ENCODE measurements at regions of chr1 and their contacts with region 1.

Region 1: DNA sequence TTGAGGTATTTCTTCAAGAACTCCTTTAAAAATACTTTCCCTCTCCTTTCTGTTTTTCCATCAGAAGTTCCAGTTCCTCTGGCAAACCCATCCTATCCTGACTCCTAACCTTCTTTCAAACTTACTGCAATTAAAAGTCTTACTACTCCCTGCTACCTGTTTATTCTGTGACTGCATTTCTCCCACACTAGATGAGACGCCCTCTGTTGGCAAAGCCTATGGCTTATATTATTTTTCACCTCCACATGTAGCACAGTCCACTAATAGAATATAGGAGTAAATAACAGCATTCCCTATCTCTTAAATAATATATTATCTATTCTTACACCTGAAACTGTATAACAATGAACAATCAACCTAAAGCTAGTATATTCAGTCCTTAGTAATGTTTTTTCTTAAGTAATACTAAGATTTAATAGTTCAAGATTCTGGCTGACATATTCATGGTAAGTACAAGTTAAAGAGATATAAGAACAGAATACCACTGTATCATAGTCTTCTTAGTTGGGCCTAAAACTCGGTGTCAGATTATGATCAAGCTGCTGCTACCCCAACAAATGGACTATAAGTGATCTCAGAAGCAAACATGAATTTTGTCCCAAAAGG is 54.8 kb downstream of the RAB3GAP2 start:
- DNase-seq: peak in 1 of 2 experiments; percentile 45
- H3K4me3 ChIP-seq: no peak overlapping the region
- H3K4me3 Mint-ChIP-seq: no peak overlapping the region
- H3K27ac Mint-ChIP-seq: no peak overlapping the region
- H3K4me1 ChIP-seq: 0 out of 2 replicates have a peak, but pooled peaks cover 3% of the 10 kb centered on the region
- H3K4me1 Mint-ChIP-seq: no peaks in the 10 kb centered on the region
- H3K27me3 ChIP-seq: no peaks in the 10 kb centered on the region
- H3K27me3 Mint-ChIP-seq: no peaks in the 10 kb centered on the region
- CTCF ChIP-seq: peak in 1 of 2 experiments; percentile 61

Region 2: DNA sequence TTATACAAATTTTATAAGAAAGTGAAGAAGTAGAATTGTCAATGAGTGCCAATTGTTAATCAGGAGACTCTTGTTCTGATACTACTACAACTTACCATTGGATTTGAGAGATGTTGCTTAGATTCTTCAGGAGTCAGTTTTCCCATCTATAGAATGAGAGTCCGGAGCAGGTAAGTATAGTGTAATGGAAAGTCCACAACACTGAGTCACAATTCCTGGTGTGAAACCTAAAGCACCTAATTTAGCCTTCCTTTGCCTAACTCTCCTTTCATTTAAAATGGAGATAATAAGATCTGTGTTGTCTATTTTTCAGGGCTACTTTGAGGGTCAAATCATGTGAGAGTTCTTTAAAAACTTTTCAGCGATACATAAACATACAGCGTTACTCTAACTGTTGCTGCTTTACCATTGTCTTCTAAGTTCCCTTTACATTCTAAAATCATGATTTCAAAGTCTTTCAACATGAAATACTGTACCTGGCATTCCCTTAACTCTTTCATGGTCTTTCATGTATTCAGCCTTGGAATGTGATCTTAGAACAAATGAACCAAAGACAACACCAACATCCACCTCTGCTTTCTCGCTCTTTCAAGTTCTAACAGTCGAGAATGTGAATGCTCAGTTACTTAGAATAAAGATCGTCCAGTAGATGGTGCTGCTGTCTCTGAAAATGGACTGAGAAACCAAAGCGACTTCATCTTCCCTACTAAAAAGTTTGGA is 380.1 kb before region 1 on chr1:
- CTCF ChIA-PET with region 1: no interaction called
- POLR2A ChIA-PET with region 1: interaction called, 3 read pairs
- intact Hi-C with region 1: loop called (anchors 5 kb)
- DNase-seq: peak in 1 of 2 experiments; percentile 63
- H3K4me3 ChIP-seq: no peak overlapping the region
- H3K4me3 Mint-ChIP-seq: no peak overlapping the region
- H3K27ac Mint-ChIP-seq: no peak overlapping the region
- H3K4me1 ChIP-seq: peaks cover 3% of the 10 kb centered on the region; the same call in 1 of the 2 replicates
- H3K4me1 Mint-ChIP-seq: peaks cover 6% of the 10 kb centered on the region
- H3K27me3 ChIP-seq: no peaks in the 10 kb centered on the region
- H3K27me3 Mint-ChIP-seq: peaks cover 15% of the 10 kb centered on the region
- CTCF ChIP-seq: peak; percentile 54 to 65

Region 3: DNA sequence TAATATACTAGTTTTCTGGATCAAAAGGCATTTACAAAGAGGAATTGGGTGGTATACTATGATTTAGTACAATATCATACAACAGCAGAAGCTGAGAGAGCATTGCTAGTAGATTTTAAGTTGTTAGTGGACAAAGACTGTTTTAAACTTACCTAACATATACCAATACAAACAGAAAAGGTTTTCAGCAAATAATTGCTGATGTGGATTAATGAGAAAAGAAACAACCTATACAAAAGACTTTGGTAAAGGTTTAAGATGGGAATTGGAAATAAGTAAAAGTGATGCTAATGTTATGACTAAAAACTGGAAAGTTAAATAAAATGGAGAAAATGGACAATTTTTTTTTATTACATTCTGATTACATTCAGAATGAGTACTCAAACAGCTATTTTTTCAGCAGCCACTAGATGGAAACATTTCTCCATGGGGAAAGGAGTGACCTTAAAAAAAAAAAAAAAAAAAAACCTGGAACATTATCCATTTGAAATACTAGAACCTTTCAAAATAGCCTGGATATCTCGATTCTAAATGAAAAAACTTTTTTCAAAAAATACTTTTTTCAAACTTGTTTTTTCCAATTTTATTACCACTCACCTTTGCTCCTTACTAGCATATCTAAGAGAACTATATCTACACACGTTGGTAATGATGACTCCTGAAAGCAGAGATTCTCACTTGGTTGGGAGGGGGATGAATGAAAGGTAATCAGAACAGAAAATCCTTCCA is 226.5 kb before region 1 on chr1:
- CTCF ChIA-PET with region 1: interaction called, 7 read pairs
- POLR2A ChIA-PET with region 1: no interaction called
- intact Hi-C with region 1: loop called (anchors 1 kb)
- DNase-seq: peak in 1 of 2 experiments; percentile 49
- H3K4me3 ChIP-seq: no peak overlapping the region
- H3K4me3 Mint-ChIP-seq: no peak overlapping the region
- H3K27ac Mint-ChIP-seq: peak overlapping the region; percentile 63
- H3K4me1 ChIP-seq: peaks cover 21% of the 10 kb centered on the region
- H3K4me1 Mint-ChIP-seq: peaks cover 24% of the 10 kb centered on the region
- H3K27me3 ChIP-seq: no peaks in the 10 kb centered on the region
- H3K27me3 Mint-ChIP-seq: no peaks in the 10 kb centered on the region
- CTCF ChIP-seq: peak; percentile 52 to 78

Region 4: GRCh38 chr1:220255204-220255603 is 37.7 kb after region 1 on chr1:
- CTCF ChIA-PET with region 1: no interaction called
- POLR2A ChIA-PET with region 1: no interaction called
- intact Hi-C with region 1: loop called (anchors 5 kb)
- DNase-seq: no peak
- H3K4me3 ChIP-seq: no peak overlapping the region
- H3K4me3 Mint-ChIP-seq: no peak overlapping the region
- H3K27ac Mint-ChIP-seq: no peak overlapping the region
- H3K4me1 ChIP-seq: peaks cover 13% of the 10 kb centered on the region
- H3K4me1 Mint-ChIP-seq: peaks cover 16% of the 10 kb centered on the region
- H3K27me3 ChIP-seq: no peaks in the 10 kb centered on the region
- H3K27me3 Mint-ChIP-seq: no peaks in the 10 kb centered on the region
- CTCF ChIP-seq: no peak

Region 5: DNA sequence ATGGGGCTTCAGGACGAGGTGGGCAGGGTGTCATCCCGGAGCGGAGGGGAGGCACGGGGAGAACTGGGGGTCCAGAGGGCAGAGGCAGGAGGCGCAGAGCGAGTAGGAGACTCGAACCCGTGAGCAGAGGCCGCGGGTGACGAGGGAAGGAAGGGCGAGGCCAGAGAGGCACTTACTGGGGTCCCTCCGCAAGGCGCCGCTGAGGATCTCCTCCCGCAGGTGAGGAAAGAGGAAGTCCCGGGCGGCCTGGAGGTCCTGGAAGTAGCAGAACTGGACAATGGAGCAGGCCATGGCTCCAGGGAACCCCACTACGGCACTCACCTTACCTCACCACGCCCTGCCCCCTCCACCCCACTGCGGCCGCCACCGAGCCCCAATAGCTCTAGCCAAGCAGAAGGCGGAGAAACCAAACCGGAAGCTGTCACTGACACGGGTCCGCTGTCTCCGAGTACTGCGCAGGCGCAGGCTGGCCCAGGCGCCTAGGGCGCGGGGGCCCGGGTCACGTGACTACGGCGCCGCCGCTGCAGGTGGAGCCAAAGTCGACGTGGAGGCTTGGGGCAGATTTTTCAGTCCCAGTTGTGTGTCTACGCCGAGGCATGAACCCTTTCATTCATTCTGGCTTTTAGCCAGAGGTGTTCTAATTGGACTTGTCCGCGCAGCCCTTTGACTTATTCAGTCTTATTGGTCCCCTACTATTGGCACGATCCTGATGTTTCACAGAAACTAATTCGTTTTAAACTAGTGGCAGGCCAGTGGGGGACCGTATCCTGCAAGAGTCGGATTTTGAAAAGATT is 54.8 kb after region 1 on chr1 and contains the start of gene RAB3GAP2:
- CTCF ChIA-PET with region 1: interaction called, 3 read pairs
- POLR2A ChIA-PET with region 1: interaction called, 6 read pairs
- intact Hi-C with region 1: loop called (anchors 1 kb)
- DNase-seq: peak; percentile 96 to 98
- H3K4me3 ChIP-seq: peak within 1 kb of the TSS; percentile 89
- H3K4me3 Mint-ChIP-seq: no peak within 1 kb of the TSS
- H3K27ac Mint-ChIP-seq: no peak within 1 kb of the TSS
- H3K4me1 ChIP-seq: peaks cover 7% of the 10 kb centered on the region
- H3K4me1 Mint-ChIP-seq: peaks cover 6% of the 10 kb centered on the region
- H3K27me3 ChIP-seq: no peaks in the 10 kb centered on the region
- H3K27me3 Mint-ChIP-seq: peaks cover 11% of the 10 kb centered on the region
- CTCF ChIP-seq: no peak
- total RNA-seq, gene RAB3GAP2: 41.1 and 47.0 TPM in 2 replicates

Region 6: GRCh38 chr1:220296981-220297380 is 79.5 kb after region 1 on chr1:
- CTCF ChIA-PET with region 1: interaction called, 11 read pairs
- POLR2A ChIA-PET with region 1: no interaction called
- intact Hi-C with region 1: no loop called
- DNase-seq: no peak
- H3K4me3 ChIP-seq: no peak overlapping the region
- H3K4me3 Mint-ChIP-seq: no peak overlapping the region
- H3K27ac Mint-ChIP-seq: no peak overlapping the region
- H3K4me1 ChIP-seq: peaks cover 4% of the 10 kb centered on the region; the same call in 1 of the 2 replicates
- H3K4me1 Mint-ChIP-seq: peaks cover 5% of the 10 kb centered on the region
- H3K27me3 ChIP-seq: no peaks in the 10 kb centered on the region
- H3K27me3 Mint-ChIP-seq: peaks cover 4% of the 10 kb centered on the region
- CTCF ChIP-seq: no peak

Region 7: DNA sequence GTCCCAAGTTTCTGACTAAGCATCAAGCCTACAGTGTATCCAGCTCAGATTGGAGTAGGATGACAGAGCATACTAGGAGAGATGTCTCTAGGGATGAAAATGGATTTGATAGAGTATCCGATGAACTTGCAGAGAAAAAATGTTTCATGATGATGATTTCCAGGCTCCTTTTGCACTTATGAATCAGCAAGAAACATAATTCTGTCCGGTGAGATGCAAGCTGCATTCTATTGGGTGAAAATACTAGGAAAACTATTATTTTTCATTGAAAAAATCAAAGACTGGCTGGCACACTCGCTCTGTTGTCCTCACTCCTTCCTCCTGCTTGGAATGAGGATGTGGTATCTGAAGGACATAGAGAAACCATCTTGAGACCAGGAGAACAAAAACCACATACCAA is 90.1 kb after region 1 on chr1:
- CTCF ChIA-PET with region 1: no interaction called
- POLR2A ChIA-PET with region 1: no interaction called
- intact Hi-C with region 1: no loop called
- DNase-seq: no peak
- H3K4me3 ChIP-seq: no peak overlapping the region
- H3K4me3 Mint-ChIP-seq: no peak overlapping the region
- H3K27ac Mint-ChIP-seq: no peak overlapping the region
- H3K4me1 ChIP-seq: no peaks in the 10 kb centered on the region
- H3K4me1 Mint-ChIP-seq: no peaks in the 10 kb centered on the region
- H3K27me3 ChIP-seq: 0 out of 2 replicates have a peak, but pooled peaks cover 2% of the 10 kb centered on the region
- H3K27me3 Mint-ChIP-seq: peaks cover 21% of the 10 kb centered on the region
- CTCF ChIP-seq: no peak

Region 8: GRCh38 chr1:220321758-220322157 is 104.3 kb after region 1 on chr1:
- CTCF ChIA-PET with region 1: no interaction called
- POLR2A ChIA-PET with region 1: no interaction called
- intact Hi-C with region 1: loop called (anchors 5 kb)
- DNase-seq: no peak
- H3K4me3 ChIP-seq: no peak overlapping the region
- H3K4me3 Mint-ChIP-seq: no peak overlapping the region
- H3K27ac Mint-ChIP-seq: no peak overlapping the region
- H3K4me1 ChIP-seq: no peaks in the 10 kb centered on the region
- H3K4me1 Mint-ChIP-seq: no peaks in the 10 kb centered on the region
- H3K27me3 ChIP-seq: no peaks in the 10 kb centered on the region
- H3K27me3 Mint-ChIP-seq: peaks cover 18% of the 10 kb centered on the region
- CTCF ChIP-seq: no peak